Mammary epithelial cell (primary cell): ENCODE measurements at regions of chr10 and their contacts with region 1.

Region 1: GRCh38 chr10:63217120-63217605 is 84.0 kb downstream of the NRBF2 start:
- DNase-seq: peak; percentile 27
- H3K4me3 ChIP-seq: no peak overlapping the region
- H3K27ac ChIP-seq: no peak overlapping the region
- H3K4me1 ChIP-seq: no peaks in the 10 kb centered on the region
- H3K27me3 ChIP-seq: no peaks in the 10 kb centered on the region
- CTCF ChIP-seq: peak; percentile 59 to 64

Region 2: DNA sequence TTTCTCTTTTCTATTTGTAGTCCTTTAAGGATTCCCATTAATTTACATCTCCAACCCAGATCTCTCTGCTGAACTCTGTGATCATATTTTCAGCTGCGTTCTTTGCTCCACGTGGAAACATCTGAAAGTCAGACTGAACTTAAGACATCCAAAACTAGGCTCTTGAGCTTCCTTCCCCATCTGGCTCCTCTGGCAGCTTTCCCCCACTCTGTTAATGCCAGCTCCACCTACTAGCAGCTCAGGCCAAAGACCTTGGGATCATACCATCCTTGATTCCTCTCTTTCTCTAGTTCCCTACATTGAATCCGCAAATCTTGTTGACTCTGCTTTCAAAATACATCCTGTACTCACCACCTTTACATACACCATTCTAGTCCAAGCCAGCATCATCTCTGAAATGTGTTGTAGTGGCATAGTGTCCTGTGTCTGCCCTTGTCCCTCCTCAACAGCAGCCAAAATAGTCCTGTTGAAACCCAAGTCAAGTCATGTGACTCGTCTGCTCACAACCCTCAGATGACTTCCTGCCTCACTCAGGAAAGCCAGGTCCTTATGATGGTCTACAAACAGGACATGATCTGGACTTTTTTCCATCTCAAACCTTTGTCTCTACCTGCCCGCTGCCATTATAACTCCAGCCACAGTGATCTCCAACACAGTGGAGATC is 311.1 kb after region 1 on chr10:
- CTCF ChIA-PET with region 1: interaction called, 10 read pairs
- dilution Hi-C with region 1: no loop called
- in situ Hi-C with region 1: no loop called
- intact Hi-C with region 1: no loop called
- DNase-seq: no peak
- H3K4me3 ChIP-seq: no peak overlapping the region
- H3K27ac ChIP-seq: no peak overlapping the region
- H3K4me1 ChIP-seq: peaks cover 6% of the 10 kb centered on the region
- H3K27me3 ChIP-seq: no peaks in the 10 kb centered on the region
- CTCF ChIP-seq: no peak